ENCODE measurements at regions of chr1 and their contacts with region 1.

Region 1: GRCh38 chr1:175035865-175036264 is 12.6 kb upstream of the MRPS14 start:
- DNase-seq: no peak
- CTCF ChIP-seq: no peak

Region 2: DNA sequence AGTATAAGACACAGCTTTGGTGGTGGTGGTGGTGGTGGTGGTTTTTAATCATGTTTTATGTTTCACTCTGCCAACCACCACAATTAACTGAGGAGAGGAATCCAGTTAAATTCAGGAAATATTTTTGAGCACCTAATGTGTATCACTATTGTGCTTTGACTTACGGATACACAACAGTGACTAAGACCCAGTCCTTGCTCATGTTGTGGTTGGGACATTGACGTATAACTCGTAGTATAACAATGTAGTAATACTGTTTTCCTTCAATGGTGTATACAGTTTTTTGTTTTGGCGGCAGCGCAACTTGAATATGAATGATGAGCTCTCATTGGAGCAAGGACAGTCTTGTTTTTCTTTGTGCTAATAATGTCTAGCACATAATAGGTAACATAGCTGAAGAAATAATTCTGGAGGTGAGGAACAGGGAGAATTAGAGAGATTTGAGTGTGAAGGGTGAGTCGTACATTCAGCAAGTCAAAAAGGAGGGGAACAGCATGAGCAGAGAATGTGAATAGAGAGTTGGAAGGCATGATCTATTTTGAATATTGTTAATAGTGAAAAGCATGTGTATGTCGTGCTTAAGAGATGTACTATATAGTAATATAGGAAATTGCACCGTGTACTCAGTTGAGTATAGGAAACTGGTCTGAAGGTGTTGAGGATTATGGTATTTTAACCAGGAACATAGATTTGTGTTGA is 30.6 kb before region 1 on chr1:
- CTCF ChIA-PET with region 1: no interaction called
- POLR2A ChIA-PET with region 1: no interaction called
- DNase-seq: no peak
- CTCF ChIP-seq: no peak

Region 3: GRCh38 chr1:175097361-175097760 is 61.5 kb after region 1 on chr1:
- CTCF ChIA-PET with region 1: no interaction called
- POLR2A ChIA-PET with region 1: no interaction called
- DNase-seq: no peak
- CTCF ChIP-seq: no peak

Region 4: DNA sequence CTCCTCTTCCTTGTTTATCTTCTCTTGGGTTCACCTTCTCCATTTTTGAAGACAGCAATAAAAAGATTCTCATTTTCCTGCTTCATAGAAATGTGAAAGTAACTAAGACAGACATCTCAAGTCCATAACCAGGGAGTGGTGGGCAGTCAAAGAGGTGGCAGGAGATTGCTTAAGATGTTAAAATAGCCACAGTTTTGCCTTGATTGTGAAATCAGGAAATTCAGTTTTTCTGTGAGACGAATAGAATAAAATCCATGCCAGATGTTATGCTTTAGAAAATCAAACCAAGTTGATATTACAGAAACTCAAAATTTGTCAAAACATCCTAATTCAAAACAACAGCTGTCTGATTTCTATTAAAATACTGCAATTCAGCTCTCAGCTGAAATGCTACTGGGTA is 89.0 kb after region 1 on chr1:
- CTCF ChIA-PET with region 1: interaction called, 19 read pairs
- POLR2A ChIA-PET with region 1: no interaction called
- DNase-seq: no peak
- CTCF ChIP-seq: no peak

Region 5: DNA sequence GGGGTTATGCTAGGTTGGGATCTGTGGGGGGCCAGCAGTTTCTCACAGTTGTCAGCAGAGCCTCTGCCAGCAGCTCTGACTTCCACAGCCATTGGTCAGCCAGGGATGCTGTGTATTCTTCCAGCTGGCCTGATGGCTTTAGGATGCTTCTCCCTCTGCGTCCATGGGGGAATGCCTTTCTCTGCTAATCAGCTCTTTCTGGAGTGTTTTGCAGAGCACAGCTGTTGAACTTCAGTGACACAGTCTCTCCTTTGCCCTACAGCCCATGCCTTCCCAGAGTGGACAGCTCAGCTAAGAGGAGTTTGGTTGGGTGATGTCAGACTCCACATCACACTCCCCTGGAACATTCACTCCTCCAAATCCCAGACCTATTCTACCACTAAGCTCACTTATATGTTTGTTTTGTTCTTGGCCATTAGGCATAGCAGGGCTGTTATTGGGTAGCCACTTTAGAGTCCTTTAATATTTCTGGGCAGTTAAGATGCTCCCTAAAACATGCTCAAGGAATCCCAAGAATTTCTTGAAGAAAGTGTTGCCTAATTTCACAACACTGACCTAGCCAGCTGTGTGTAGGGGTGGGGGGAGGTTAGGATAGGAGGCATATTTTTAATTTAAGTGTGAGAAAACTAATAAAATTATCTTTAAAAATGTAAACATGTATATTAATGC is 232.0 kb after region 1 on chr1:
- CTCF ChIA-PET with region 1: no interaction called
- POLR2A ChIA-PET with region 1: no interaction called
- DNase-seq: no peak
- CTCF ChIP-seq: no peak